Activated naive CD8-positive, alpha-beta T cell treated with anti-CD3 and anti-CD28 coated beads, Interleukin-2, amount 10 ng/mL, durations not matched to agents 7 days and 5 days (primary cell): ENCODE measurements at regions of chr13 and their contacts with region 1.

Region 1: GRCh38 chr13:45340422-45340925 is 509 bp downstream of the TPT1 start:
- DNase-seq: peak; percentile 85
- ATAC-seq: peak; percentile 43
- H3K4me3 Mint-ChIP-seq: peak overlapping the region; percentile 97
- H3K27ac Mint-ChIP-seq: peak overlapping the region; percentile 99
- H3K4me1 Mint-ChIP-seq: peaks cover 38% of the 10 kb centered on the region
- H3K27me3 Mint-ChIP-seq: no peaks in the 10 kb centered on the region

Region 2: GRCh38 chr13:45254401-45254800 is 86.1 kb before region 1 on chr13:
- POLR2A ChIA-PET with region 1: no interaction called
- DNase-seq: no peak
- ATAC-seq: no peak
- H3K4me3 Mint-ChIP-seq: no peak overlapping the region
- H3K27ac Mint-ChIP-seq: no peak overlapping the region
- H3K4me1 Mint-ChIP-seq: peaks cover 11% of the 10 kb centered on the region
- H3K27me3 Mint-ChIP-seq: no peaks in the 10 kb centered on the region

Region 3: GRCh38 chr13:45280751-45281634 is 59.5 kb before region 1 on chr13:
- POLR2A ChIA-PET with region 1: no interaction called
- DNase-seq: peak; percentile 39
- ATAC-seq: peak; percentile 66
- H3K4me3 Mint-ChIP-seq: no peak overlapping the region
- H3K27ac Mint-ChIP-seq: no peak overlapping the region
- H3K4me1 Mint-ChIP-seq: peaks cover 1% of the 10 kb centered on the region
- H3K27me3 Mint-ChIP-seq: no peaks in the 10 kb centered on the region

Region 4: DNA sequence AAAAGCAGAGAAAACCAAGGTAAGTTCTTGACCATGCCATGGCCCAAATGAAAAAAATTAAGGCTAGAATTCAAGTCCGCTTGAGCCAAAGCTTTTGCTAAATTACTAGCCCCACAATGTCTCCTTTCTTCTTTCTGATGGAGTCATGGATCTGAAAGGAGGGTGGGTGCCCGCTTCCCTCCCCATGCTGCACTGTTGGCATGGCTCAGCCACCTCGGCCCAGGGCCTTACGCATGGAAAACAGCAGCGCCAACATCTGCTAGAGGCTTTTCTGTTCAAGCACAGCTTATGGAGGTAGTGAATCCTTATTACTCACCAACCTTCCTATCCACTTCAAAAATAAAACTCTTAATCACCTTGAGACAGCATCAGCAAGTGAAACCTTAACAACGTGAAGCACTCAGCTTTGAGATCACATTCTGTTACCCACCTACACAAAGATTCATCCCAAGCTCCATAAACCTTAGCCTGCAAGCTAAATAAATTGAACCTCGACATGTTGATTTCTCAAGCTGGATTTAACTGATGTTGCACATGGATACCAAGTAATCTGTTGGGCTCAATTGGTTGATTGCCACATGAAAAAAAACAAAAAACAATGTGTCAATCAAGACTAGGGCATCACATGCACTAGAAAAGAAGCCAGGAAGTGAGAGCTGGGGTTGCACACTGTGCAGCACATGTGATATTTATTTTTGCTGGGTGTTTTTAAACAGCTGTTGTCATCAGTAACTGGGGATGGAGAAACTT is 42.8 kb before region 1 on chr13:
- POLR2A ChIA-PET with region 1: no interaction called
- DNase-seq: no peak
- ATAC-seq: peak; percentile 83
- H3K4me3 Mint-ChIP-seq: no peak overlapping the region
- H3K27ac Mint-ChIP-seq: peak overlapping the region; percentile 74
- H3K4me1 Mint-ChIP-seq: peaks cover 23% of the 10 kb centered on the region
- H3K27me3 Mint-ChIP-seq: peaks cover 6% of the 10 kb centered on the region

Region 5: GRCh38 chr13:45314822-45315221 is 25.7 kb before region 1 on chr13:
- POLR2A ChIA-PET with region 1: no interaction called
- DNase-seq: no peak
- ATAC-seq: no peak
- H3K4me3 Mint-ChIP-seq: no peak overlapping the region
- H3K27ac Mint-ChIP-seq: no peak overlapping the region
- H3K4me1 Mint-ChIP-seq: peaks cover 14% of the 10 kb centered on the region
- H3K27me3 Mint-ChIP-seq: peaks cover 9% of the 10 kb centered on the region

Region 6: GRCh38 chr13:45328661-45329111 is 11.8 kb before region 1 on chr13:
- POLR2A ChIA-PET with region 1: interaction called, 11 read pairs
- DNase-seq: no peak
- ATAC-seq: no peak
- H3K4me3 Mint-ChIP-seq: no peak overlapping the region
- H3K27ac Mint-ChIP-seq: no peak overlapping the region
- H3K4me1 Mint-ChIP-seq: peaks cover 39% of the 10 kb centered on the region
- H3K27me3 Mint-ChIP-seq: no peaks in the 10 kb centered on the region

Region 7: DNA sequence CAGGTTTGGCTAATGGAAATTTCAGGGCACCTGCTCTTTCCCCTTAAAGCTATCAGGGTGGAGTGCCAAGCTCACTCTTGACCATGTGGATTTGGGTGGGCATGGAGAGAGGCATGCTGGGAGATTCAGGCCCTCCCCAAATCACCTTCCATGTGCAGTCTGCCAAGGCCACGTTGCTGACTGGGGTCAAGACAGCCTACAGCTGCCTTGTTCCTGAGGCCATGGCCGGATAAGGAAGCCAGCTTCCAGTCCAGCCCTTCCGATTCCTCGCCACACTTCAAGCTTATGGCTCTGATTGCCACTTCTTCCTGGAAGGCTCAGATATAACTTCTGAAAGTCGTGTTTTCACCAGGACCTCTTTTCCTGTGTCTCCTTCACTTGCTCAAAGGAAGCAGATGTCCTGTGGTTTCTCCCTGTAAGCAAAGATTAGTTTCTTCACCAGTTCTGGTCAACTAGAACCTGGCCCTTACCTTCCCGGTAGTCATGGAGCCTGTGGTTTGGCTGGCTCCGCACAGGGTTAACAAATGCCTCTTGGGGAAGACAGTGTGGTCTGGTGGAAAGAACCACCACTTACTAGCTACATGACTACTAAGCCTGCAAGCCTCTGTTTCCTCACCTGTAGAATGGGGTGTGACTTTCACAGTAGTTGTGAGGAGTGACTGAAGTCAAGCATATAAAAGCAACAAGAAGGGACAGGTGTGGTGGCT is 16.6 kb after region 1 on chr13:
- POLR2A ChIA-PET with region 1: interaction called, 17 read pairs
- DNase-seq: no peak
- ATAC-seq: peak; percentile 67
- H3K4me3 Mint-ChIP-seq: peak overlapping the region; percentile 31
- H3K27ac Mint-ChIP-seq: peak overlapping the region; percentile 72
- H3K4me1 Mint-ChIP-seq: peaks cover 32% of the 10 kb centered on the region
- H3K27me3 Mint-ChIP-seq: no peaks in the 10 kb centered on the region

Region 8: GRCh38 chr13:45367358-45367757 is 26.9 kb after region 1 on chr13:
- POLR2A ChIA-PET with region 1: interaction called, 22 read pairs
- DNase-seq: peak; percentile 74
- ATAC-seq: peak; percentile 100
- H3K4me3 Mint-ChIP-seq: peak overlapping the region; percentile 69
- H3K27ac Mint-ChIP-seq: peak overlapping the region; percentile 95
- H3K4me1 Mint-ChIP-seq: peaks cover 42% of the 10 kb centered on the region
- H3K27me3 Mint-ChIP-seq: no peaks in the 10 kb centered on the region

Region 9: GRCh38 chr13:45417790-45418534 is 77.5 kb after region 1 on chr13 and contains the start of gene SLC25A30:
- POLR2A ChIA-PET with region 1: interaction called, 13 read pairs
- DNase-seq: peak; percentile 92
- ATAC-seq: peak; percentile 91
- H3K4me3 Mint-ChIP-seq: peak within 1 kb of the TSS; percentile 96
- H3K27ac Mint-ChIP-seq: peak within 1 kb of the TSS; percentile 94
- H3K4me1 Mint-ChIP-seq: peaks cover 4% of the 10 kb centered on the region
- H3K27me3 Mint-ChIP-seq: peaks cover 2% of the 10 kb centered on the region
- total RNA-seq, gene SLC25A30: 18.6 to 19.6 TPM